ENCODE measurements at regions of chr3 and their contacts with region 1.

Region 1: GRCh38 chr3:31704591-31705179 is 172.0 kb downstream of the STT3B start:
- DNase-seq: no peak
- H3K4me3 ChIP-seq: no peak overlapping the region
- H3K27ac ChIP-seq: no peak overlapping the region
- H3K4me1 ChIP-seq: peaks cover 0 to 3% (median 0%) of the 10 kb centered on the region in 4 experiments; a peak in 1 of 7 replicates
- H3K27me3 ChIP-seq: no peaks in the 10 kb centered on the region
- CTCF ChIP-seq: no peak
- EP300 ChIP-seq: no peak
- POLR2A ChIP-seq: no peak
- RAD21 ChIP-seq: no peak

Region 2: GRCh38 chr3:31692726-31693125 is 12.0 kb before region 1 on chr3:
- CTCF ChIA-PET with region 1: interaction called, 13 read pairs
- POLR2A ChIA-PET with region 1: interaction called, 4 read pairs
- DNase-seq: no peak
- H3K4me3 ChIP-seq: no peak overlapping the region
- H3K27ac ChIP-seq: no peak overlapping the region
- H3K4me1 ChIP-seq: peaks cover 0 to 6% (median 0%) of the 10 kb centered on the region in 4 experiments; a peak in 1 of 7 replicates
- H3K27me3 ChIP-seq: no peaks in the 10 kb centered on the region
- CTCF ChIP-seq: peak; percentile 14 to 44 (median 32); a peak in 3 of 4 replicates
- EP300 ChIP-seq: no peak
- POLR2A ChIP-seq: no peak
- RAD21 ChIP-seq: peak; percentile 39 to 49

Measured in H1 (cell line).